CD4-positive, alpha-beta T cell (primary cell): ENCODE measurements at regions of chr1 and their contacts with region 1.

Region 1: GRCh38 chr1:10635085-10635896 is 160.5 kb downstream of the PEX14 start:
- DNase-seq: no peak
- ATAC-seq: no peak
- H3K4me3 ChIP-seq: no peak overlapping the region
- H3K4me3 Mint-ChIP-seq: no peak overlapping the region
- H3K27ac ChIP-seq: no peak overlapping the region
- H3K27ac Mint-ChIP-seq: no peak overlapping the region
- H3K4me1 ChIP-seq: peaks cover 6% of the 10 kb centered on the region
- H3K4me1 Mint-ChIP-seq: no peaks in the 10 kb centered on the region
- H3K27me3 ChIP-seq: no peaks in the 10 kb centered on the region
- H3K27me3 Mint-ChIP-seq: no peaks in the 10 kb centered on the region
- CTCF ChIP-seq: no peak

Region 2: GRCh38 chr1:10280439-10281350 is 354.6 kb before region 1 on chr1:
- CTCF ChIA-PET with region 1: no interaction called
- POLR2A ChIA-PET with region 1: no interaction called
- intact Hi-C with region 1: no loop called
- DNase-seq: no peak
- ATAC-seq: no peak
- H3K4me3 ChIP-seq: no peak overlapping the region
- H3K4me3 Mint-ChIP-seq: no peak overlapping the region
- H3K27ac ChIP-seq: no peak overlapping the region
- H3K27ac Mint-ChIP-seq: no peak overlapping the region
- H3K4me1 ChIP-seq: no peaks in the 10 kb centered on the region
- H3K4me1 Mint-ChIP-seq: no peaks in the 10 kb centered on the region
- H3K27me3 ChIP-seq: no peaks in the 10 kb centered on the region
- H3K27me3 Mint-ChIP-seq: no peaks in the 10 kb centered on the region
- CTCF ChIP-seq: no peak

Region 3: GRCh38 chr1:10502206-10502605 is 133.1 kb before region 1 on chr1:
- CTCF ChIA-PET with region 1: no interaction called
- POLR2A ChIA-PET with region 1: no interaction called
- intact Hi-C with region 1: loop called in 1 of 2 experiments (anchors 5 kb)
- DNase-seq: no peak
- ATAC-seq: no peak
- H3K4me3 ChIP-seq: no peak overlapping the region
- H3K4me3 Mint-ChIP-seq: no peak overlapping the region
- H3K27ac ChIP-seq: no peak overlapping the region
- H3K27ac Mint-ChIP-seq: peak overlapping the region; percentile 36
- H3K4me1 ChIP-seq: peaks cover 9% of the 10 kb centered on the region
- H3K4me1 Mint-ChIP-seq: peaks cover 53% of the 10 kb centered on the region
- H3K27me3 ChIP-seq: no peaks in the 10 kb centered on the region
- H3K27me3 Mint-ChIP-seq: no peaks in the 10 kb centered on the region
- CTCF ChIP-seq: no peak